ENCODE measurements at regions of chr17 and their contacts with region 1.

Region 1: DNA sequence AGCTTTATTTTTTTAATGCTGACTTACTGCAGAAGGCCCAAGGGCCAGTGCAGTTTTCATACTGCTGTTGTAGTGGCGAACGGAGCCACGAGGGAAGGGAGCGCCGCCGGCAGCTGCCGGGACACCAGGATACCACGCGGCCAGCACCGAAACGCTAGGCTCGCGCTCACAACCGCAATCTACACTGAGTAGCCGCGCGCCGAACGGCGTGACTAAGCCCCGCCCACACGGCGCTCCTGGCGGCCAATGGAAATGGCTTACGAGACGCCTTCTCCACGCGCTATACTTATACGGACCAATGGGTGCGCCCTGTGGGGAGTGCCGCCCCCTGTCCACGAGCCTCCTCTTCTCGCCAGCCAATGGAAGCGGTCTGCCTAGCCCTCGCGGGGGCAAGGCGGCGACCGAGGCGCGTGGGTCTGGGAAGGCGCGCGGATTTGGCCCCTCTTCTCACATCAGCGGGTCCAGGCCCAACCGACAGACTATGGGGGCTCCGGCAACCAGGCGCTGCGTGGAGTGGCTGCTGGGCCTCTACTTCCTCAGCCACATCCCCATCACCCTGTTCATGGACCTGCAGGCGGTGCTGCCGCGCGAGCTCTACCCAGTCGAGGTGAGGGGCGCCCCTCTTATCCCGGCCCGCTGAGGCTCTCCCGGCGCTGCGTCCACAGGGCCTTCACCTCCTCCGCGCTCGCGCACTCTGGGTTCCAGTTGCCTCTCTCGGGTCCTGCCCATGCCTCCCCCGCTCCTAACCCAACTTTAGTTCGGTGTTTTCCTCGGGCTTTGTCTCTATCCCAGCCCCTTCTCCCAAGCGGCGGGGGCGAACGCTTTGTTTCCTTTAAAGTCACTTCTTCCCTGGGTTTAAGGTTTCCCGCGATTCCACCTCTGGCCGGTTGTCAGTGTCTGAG is at the start of gene TMEM97:
- DNase-seq: peak; percentile 96
- H3K4me3 Mint-ChIP-seq: peak within 1 kb of the TSS; percentile 82
- H3K27ac Mint-ChIP-seq: peak within 1 kb of the TSS; percentile 42
- H3K4me1 Mint-ChIP-seq: peaks cover 22% of the 10 kb centered on the region
- H3K27me3 Mint-ChIP-seq: no peaks in the 10 kb centered on the region
- total RNA-seq, gene TMEM97: 27.1 to 29.8 TPM

Region 2: GRCh38 chr17:28041068-28041843 is 277.8 kb before region 1 on chr17:
- CTCF ChIA-PET with region 1: no interaction called
- POLR2A ChIA-PET with region 1: no interaction called
- intact Hi-C with region 1: loop called (anchors 5 kb)
- DNase-seq: peak; percentile 100
- H3K4me3 Mint-ChIP-seq: peak overlapping the region; percentile 71
- H3K27ac Mint-ChIP-seq: peak overlapping the region; percentile 60
- H3K4me1 Mint-ChIP-seq: peaks cover 48% of the 10 kb centered on the region
- H3K27me3 Mint-ChIP-seq: no peaks in the 10 kb centered on the region

Region 3: GRCh38 chr17:28174352-28174964 is 144.6 kb before region 1 on chr17:
- CTCF ChIA-PET with region 1: no interaction called
- POLR2A ChIA-PET with region 1: no interaction called
- intact Hi-C with region 1: no loop called
- DNase-seq: peak; percentile 62
- H3K4me3 Mint-ChIP-seq: no peak overlapping the region
- H3K27ac Mint-ChIP-seq: no peak overlapping the region
- H3K4me1 Mint-ChIP-seq: peaks cover 14% of the 10 kb centered on the region
- H3K27me3 Mint-ChIP-seq: no peaks in the 10 kb centered on the region

Region 4: GRCh38 chr17:28282596-28282995 is 36.4 kb before region 1 on chr17:
- CTCF ChIA-PET with region 1: interaction called, 3 read pairs
- POLR2A ChIA-PET with region 1: no interaction called
- intact Hi-C with region 1: loop called (anchors 5 kb)
- DNase-seq: no peak
- H3K4me3 Mint-ChIP-seq: no peak overlapping the region
- H3K27ac Mint-ChIP-seq: no peak overlapping the region
- H3K4me1 Mint-ChIP-seq: peaks cover 10% of the 10 kb centered on the region
- H3K27me3 Mint-ChIP-seq: peaks cover 11% of the 10 kb centered on the region

Region 5: DNA sequence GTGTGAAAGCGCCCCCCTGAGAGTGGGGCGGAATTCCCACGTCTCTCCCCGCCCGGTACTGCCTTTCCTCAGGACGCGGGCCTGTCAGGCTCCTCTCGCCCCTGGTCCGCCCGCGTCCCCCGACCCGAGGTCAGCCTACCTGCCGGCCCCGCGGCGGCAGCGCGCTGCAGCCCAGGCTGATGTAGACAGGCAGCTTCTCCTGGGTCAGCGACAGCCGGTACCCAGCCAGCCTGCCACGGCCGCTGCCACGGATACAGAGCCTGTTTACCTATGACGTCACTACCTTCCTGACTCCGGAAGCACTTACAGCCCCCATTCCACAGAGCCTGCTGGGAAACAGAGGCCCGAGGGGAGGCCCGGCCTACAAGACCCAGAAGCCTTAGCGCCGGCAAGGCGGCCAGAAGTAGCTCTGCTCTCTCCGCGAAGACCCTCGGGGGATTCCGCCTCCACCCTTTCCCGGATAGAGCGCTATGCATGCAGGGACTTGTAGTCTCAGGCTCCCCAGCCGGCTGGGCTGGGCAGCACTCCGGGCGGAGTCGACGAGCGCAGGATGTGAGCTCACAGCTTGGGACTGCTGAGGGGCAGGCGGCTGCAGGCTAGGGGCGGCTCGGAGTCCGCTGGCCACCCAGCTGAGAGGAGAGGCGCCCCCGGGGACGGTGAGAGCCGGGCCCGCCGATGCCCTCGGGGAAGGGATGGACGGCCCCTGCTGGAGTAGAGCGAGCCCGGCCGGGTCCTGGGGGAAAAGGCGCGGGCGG is 16.4 kb after region 1 on chr17 and contains the starts of genes IFT20 and TNFAIP1:
- CTCF ChIA-PET with region 1: interaction called, 13 read pairs
- POLR2A ChIA-PET with region 1: interaction called, 21 read pairs
- intact Hi-C with region 1: loop called (anchors 1 kb)
- DNase-seq: peak; percentile 99
- H3K4me3 Mint-ChIP-seq: peak within 1 kb of the TSS; percentile 94
- H3K27ac Mint-ChIP-seq: peak within 1 kb of the TSS; percentile 87
- H3K4me1 Mint-ChIP-seq: peaks cover 36% of the 10 kb centered on the region
- H3K27me3 Mint-ChIP-seq: no peaks in the 10 kb centered on the region
- total RNA-seq, gene IFT20: 20.3 to 20.6 TPM
- total RNA-seq, gene TNFAIP1: 24.4 to 27.3 TPM

Region 6: GRCh38 chr17:28371245-28372202 is 52.5 kb after region 1 on chr17 and contains the start of gene SARM1:
- CTCF ChIA-PET with region 1: no interaction called
- POLR2A ChIA-PET with region 1: no interaction called
- intact Hi-C with region 1: loop called (anchors 1 kb)
- DNase-seq: peak; percentile 93
- H3K4me3 Mint-ChIP-seq: peak within 1 kb of the TSS; percentile 86
- H3K27ac Mint-ChIP-seq: peak within 1 kb of the TSS; percentile 79
- H3K4me1 Mint-ChIP-seq: peaks cover 16% of the 10 kb centered on the region
- H3K27me3 Mint-ChIP-seq: no peaks in the 10 kb centered on the region
- total RNA-seq, gene SARM1: 16.5 to 18.3 TPM